ENCODE measurements at regions of chr20 and their contacts with region 1.

Region 1: GRCh38 chr20:40945754-40946450 is 82.7 kb upstream of the TOP1 start:
- DNase-seq: peak; percentile 83
- H3K4me3 ChIP-seq: no peak overlapping the region
- H3K27ac ChIP-seq: no peak overlapping the region
- H3K4me1 ChIP-seq: no peaks in the 10 kb centered on the region; a peak in 1 of 4 replicates
- H3K27me3 ChIP-seq: no peaks in the 10 kb centered on the region
- CTCF ChIP-seq: peak; percentile 54
- EP300 ChIP-seq: no peak
- RAD21 ChIP-seq: peak; percentile 95

Region 2: GRCh38 chr20:40442181-40442963 is 503.5 kb before region 1 on chr20:
- CTCF ChIA-PET with region 1: no interaction called
- POLR2A ChIA-PET with region 1: no interaction called
- DNase-seq: peak; percentile 30
- H3K4me3 ChIP-seq: no peak overlapping the region
- H3K27ac ChIP-seq: no peak overlapping the region
- H3K4me1 ChIP-seq: no peaks in the 10 kb centered on the region
- H3K27me3 ChIP-seq: no peaks in the 10 kb centered on the region; the same call in 1 of the 2 replicates
- CTCF ChIP-seq: no peak
- EP300 ChIP-seq: no peak
- RAD21 ChIP-seq: no peak

Region 3: DNA sequence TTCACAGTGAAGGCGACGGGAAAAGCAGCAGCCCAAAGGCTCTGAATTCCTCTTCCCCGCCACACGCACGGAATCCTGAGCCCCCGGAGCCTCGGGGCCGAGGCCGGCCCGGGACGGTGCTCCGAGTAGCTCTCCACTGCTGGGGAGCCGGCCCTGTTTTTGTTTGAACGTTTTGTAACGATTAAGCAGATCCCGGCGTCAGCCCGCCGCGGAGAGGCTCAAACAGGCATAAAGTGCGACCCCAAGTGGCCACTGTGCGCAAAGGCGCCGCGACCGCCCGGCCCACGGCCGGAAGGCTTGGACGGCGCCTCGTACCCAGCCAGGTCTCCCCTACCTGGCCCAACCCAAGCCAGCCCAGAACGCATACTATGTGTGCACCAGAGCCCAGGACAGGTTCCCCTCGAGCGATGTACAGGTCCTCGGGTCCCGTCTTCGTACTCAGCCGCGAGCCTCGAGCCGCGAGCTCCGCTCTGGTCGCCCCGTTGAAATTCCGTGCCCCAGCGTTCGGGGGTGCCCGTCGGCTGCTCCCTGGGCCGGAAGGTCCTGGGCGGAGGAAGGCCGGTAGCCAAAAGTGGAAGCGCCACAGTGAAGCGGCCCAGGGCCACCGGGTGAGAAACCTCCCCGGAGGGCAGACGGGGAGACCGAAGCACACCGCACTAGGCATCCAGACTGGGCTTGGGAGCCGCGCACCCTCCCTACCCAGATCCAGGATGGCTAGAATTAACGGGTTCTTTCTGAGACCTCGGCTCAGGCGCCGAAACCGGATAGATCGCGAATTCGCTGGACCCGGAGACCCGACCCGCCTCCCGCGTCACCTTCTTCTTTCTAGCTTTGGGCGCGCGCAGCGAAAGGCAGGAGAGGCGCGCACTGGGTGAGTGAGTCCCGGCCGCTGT is 255.7 kb before region 1 on chr20:
- CTCF ChIA-PET with region 1: interaction called, 24 read pairs
- POLR2A ChIA-PET with region 1: no interaction called
- DNase-seq: peak; percentile 89
- H3K4me3 ChIP-seq: peak overlapping the region; percentile 55 to 77
- H3K27ac ChIP-seq: peak overlapping the region in 1 of 2 experiments; percentile 85; a peak in 2 of 4 replicates
- H3K4me1 ChIP-seq: peaks cover 0 to 11% of the 10 kb centered on the region in 2 experiments; a peak in 1 of 4 replicates
- H3K27me3 ChIP-seq: peaks cover 61% of the 10 kb centered on the region
- CTCF ChIP-seq: peak; percentile 82
- EP300 ChIP-seq: no peak
- RAD21 ChIP-seq: peak; percentile 89

Region 4: DNA sequence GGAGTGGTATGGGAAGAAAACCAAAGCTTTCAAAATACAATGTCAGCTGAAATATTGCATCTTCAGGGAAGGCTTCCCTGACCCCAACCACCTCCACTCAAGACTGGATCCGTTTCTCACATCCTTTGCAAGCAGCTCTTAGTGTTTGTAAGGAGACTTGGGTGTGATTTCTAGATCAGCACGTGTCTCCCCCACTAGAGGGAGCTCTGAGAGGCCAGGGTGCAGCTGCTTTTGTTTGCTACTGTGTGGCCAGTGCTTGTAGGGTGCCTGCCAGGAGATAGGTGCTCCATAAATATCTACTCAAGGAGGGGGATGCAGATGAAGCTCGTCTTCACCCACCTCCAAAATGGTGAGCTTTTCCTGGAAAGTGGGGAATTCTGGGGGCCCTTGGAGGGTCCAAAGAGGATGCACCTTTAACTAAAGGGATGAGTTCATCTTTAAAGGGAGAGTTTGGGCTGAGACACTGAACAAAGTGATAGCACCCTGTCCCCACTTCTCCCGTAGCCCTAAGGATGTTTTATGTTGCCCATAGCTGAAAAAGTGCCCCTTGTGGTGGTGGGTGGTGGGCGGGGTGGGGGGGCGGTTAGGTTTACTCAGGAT is 204.3 kb before region 1 on chr20:
- CTCF ChIA-PET with region 1: interaction called, 31 read pairs
- POLR2A ChIA-PET with region 1: no interaction called
- DNase-seq: no peak
- H3K4me3 ChIP-seq: no peak overlapping the region
- H3K27ac ChIP-seq: no peak overlapping the region
- H3K4me1 ChIP-seq: peaks cover 0 to 10% of the 10 kb centered on the region in 2 experiments; a peak in 2 of 4 replicates
- H3K27me3 ChIP-seq: no peaks in the 10 kb centered on the region
- CTCF ChIP-seq: peak; percentile 54
- EP300 ChIP-seq: no peak
- RAD21 ChIP-seq: peak; percentile 48

Region 5: DNA sequence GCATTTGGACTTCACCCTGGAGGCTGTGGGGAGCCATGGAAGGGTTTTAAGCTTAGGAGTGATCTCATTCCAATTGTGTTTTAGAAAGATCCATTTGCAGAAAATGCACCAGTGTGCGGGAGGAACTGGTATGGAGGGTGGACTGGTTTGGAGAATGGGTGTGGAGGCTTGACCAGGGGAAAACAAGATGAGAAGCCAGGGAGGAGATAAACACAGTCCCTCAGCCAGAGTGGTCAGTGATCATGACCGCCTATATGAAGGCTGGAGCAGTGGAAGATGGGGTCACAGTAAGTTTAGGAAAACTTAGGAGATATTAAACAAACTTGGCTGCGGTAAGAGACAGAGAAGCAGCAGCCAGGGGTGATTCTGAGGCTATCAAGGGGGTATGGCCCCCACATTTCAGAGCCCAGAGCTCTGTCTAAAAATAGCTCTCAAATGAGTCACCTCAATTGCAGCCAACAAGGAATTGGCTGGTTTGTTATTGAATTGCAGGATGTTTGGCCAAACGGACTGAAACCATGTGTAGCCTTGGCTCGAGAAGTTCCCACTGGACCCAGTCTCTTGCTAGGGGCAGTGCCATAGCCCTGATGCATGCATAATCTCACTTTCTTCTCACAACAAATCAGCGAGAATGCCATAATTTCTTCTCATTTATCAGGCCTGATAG is 77.2 kb before region 1 on chr20:
- CTCF ChIA-PET with region 1: interaction called, 12 read pairs
- POLR2A ChIA-PET with region 1: no interaction called
- DNase-seq: no peak
- H3K4me3 ChIP-seq: no peak overlapping the region
- H3K27ac ChIP-seq: no peak overlapping the region
- H3K4me1 ChIP-seq: peaks cover 0 to 6% of the 10 kb centered on the region in 2 experiments; a peak in 2 of 4 replicates
- H3K27me3 ChIP-seq: no peaks in the 10 kb centered on the region
- CTCF ChIP-seq: no peak
- EP300 ChIP-seq: no peak
- RAD21 ChIP-seq: no peak

Region 6: DNA sequence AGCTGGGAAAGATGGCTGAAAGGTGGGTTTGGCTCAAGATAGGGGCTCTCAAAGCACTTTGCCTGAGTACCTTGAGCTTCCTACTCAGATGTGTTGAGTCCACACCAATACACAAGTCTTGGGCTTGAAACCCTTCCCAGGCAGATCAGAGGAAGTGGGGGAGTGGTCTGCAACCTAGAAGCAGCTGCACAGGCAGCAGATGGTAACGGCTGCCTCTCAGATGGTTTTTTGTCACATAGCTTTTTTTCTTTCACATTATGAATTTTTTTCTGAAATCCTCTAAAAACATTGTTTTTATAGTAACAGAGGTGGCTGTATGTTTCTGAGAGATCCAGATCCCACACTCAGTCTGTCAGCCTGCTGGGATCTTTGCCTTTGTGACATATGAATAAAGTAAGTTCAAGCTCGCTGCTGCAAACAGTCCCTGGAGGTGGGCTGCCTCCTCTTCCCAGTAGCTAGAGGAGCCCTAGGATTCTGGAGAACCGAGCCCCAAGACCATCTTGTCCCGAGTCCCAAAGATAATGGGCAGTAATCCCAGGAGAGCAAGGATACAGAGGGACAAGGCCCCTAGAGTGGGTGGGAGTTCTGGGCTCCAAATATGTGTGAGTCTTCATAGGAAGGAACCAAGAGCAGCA is 14.4 kb before region 1 on chr20:
- CTCF ChIA-PET with region 1: interaction called, 11 read pairs
- POLR2A ChIA-PET with region 1: no interaction called
- DNase-seq: no peak
- H3K4me3 ChIP-seq: no peak overlapping the region
- H3K27ac ChIP-seq: no peak overlapping the region
- H3K4me1 ChIP-seq: no peaks in the 10 kb centered on the region
- H3K27me3 ChIP-seq: no peaks in the 10 kb centered on the region
- CTCF ChIP-seq: no peak
- EP300 ChIP-seq: no peak
- RAD21 ChIP-seq: no peak